ENCODE measurements at regions of chr12 and their contacts with region 1.

Region 1: DNA sequence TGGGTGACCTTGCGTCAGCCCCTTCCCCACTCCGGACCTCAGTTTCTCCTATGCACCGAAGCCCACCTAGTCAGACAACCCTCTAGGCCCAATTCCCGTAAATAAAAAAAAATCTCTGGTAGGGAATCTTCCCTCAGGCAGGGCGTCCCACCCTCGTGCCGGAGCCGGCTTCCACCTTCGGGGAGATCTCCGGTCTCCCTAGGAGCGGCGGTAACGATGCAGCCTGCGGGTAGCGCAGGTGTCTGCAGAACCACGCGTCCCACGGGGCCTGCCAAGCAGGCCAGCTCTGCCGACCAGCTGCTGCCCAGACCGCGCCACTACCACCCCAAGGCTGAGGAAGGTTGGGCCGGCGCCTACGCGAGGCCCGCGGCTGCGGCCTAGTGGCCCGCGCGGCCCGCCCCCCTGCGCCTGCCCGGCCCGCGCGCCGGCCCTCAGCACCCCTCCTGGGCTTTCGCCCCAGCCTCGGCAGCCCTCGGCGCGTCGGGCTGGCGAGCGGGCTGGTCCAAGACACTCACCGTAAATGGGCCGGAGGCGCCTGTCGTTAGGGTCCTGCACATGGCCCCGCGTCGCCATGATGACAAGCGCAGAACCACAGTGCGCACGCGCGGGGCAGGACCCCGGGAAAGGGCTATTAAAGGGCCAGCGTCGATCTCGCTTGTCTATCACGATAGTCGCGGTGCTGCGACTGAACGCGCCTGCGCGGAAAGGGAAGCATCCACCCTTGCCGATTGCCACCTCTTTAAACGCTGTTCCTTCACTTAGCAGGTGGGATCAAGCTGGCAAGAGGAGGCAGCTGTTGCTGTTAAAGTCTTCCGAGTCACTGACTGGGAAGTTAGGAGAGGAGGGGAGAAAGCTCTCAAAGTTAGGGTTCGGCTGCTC is at the start of gene NAA25:
- DNase-seq: peak; percentile 75
- ATAC-seq: peak; percentile 72
- H3K4me3 ChIP-seq: peak within 1 kb of the TSS; percentile 63 to 91 (median 90)
- H3K27ac ChIP-seq: peak within 1 kb of the TSS; percentile 93
- H3K4me1 ChIP-seq: peaks cover 66% of the 10 kb centered on the region
- H3K27me3 ChIP-seq: no peaks in the 10 kb centered on the region; a peak in 1 of 5 replicates
- CTCF ChIP-seq: no peak
- EP300 ChIP-seq: no peak
- POLR2A ChIP-seq: peak; percentile 51 to 72; a peak in 3 of 4 replicates
- RAD21 ChIP-seq: no peak
- total RNA-seq, gene NAA25: 32.0 and 36.1 TPM in 2 replicates

Region 2: DNA sequence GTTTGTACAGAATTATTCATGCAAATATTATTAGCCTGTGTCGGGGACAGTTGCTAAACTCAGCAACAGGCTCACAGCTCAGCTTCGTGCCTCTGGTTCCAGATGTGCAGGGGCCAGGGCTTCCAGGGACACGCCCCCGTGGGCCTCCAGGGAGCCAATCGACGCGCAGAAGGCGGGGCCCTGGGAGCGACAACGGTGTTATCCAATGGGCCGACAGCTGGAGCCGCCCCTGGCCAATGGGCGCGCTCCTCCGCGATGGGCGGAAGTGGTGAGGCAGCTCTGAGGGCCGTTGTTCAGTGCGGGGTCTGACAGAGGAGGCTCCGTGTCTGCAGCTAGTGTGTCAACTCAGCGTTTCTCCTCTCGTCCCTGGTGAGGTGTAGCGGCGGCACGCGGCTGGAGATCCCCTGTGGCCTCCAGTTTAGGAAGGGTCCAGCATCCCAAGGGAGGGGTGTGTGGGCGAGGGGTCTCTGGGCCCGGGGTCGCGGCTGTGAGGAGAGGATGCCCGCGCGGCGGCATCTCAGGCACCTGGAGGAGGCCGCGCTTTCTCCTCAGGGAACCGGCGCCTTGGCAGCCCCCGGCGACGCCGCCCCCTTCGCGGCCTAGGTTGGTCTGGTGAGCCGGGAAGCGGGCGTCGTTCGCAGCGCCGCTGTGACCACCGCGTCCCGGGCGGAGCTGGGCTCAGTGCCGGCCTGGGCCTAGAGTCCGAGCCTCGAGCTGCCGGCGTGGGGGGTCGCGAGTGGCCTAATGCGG is 17.0 kb after region 1 on chr12 and contains the start of gene TRAFD1:
- CTCF ChIA-PET with region 1: no interaction called
- POLR2A ChIA-PET with region 1: interaction called, 85 read pairs
- in situ Hi-C with region 1: no loop called
- intact Hi-C with region 1: no loop called
- DNase-seq: peak; percentile 94
- ATAC-seq: peak; percentile 99
- H3K4me3 ChIP-seq: peak within 1 kb of the TSS; percentile 79 to 93 (median 81)
- H3K27ac ChIP-seq: peak within 1 kb of the TSS; percentile 61
- H3K4me1 ChIP-seq: peaks cover 54% of the 10 kb centered on the region
- H3K27me3 ChIP-seq: no peaks in the 10 kb centered on the region
- CTCF ChIP-seq: 0 out of 2 replicates have a peak, but pooled peaks have one; percentile 19
- EP300 ChIP-seq: no peak
- POLR2A ChIP-seq: peak; percentile 92 to 99
- RAD21 ChIP-seq: 0 out of 2 replicates have a peak, but pooled peaks have one; percentile 36
- total RNA-seq, gene TRAFD1: 20.9 and 27.8 TPM in 2 replicates

Region 3: GRCh38 chr12:112261559-112261958 is 153.1 kb after region 1 on chr12:
- CTCF ChIA-PET with region 1: no interaction called
- POLR2A ChIA-PET with region 1: no interaction called
- in situ Hi-C with region 1: no loop called
- intact Hi-C with region 1: no loop called
- DNase-seq: peak; percentile 13
- ATAC-seq: peak; percentile 92
- H3K4me3 ChIP-seq: no peak overlapping the region
- H3K27ac ChIP-seq: no peak overlapping the region
- H3K4me1 ChIP-seq: no peaks in the 10 kb centered on the region
- H3K27me3 ChIP-seq: no peaks in the 10 kb centered on the region
- CTCF ChIP-seq: peak; percentile 29; the same call in 1 of the 2 replicates
- EP300 ChIP-seq: no peak
- POLR2A ChIP-seq: no peak
- RAD21 ChIP-seq: 0 out of 2 replicates have a peak, but pooled peaks have one; percentile 10

Measured in HepG2 (cell line).